OCI-LY7 (cell line): ENCODE measurements at regions of chr9 and their contacts with region 1.

Region 1: GRCh38 chr9:14189578-14189977 is 124.4 kb downstream of the NFIB start:
- DNase-seq: no peak
- H3K4me3 ChIP-seq: no peak overlapping the region
- H3K27ac ChIP-seq: no peak overlapping the region
- H3K4me1 ChIP-seq: peaks cover 19% of the 10 kb centered on the region
- CTCF ChIP-seq: no peak

Region 2: GRCh38 chr9:13427587-13427986 is 762.0 kb before region 1 on chr9:
- CTCF ChIA-PET with region 1: no interaction called
- POLR2A ChIA-PET with region 1: no interaction called
- intact Hi-C with region 1: no loop called
- DNase-seq: peak; percentile 57
- H3K4me3 ChIP-seq: no peak overlapping the region
- H3K27ac ChIP-seq: no peak overlapping the region
- H3K4me1 ChIP-seq: no peaks in the 10 kb centered on the region
- CTCF ChIP-seq: peak; percentile 94

Region 3: GRCh38 chr9:13932528-13933267 is 256.9 kb before region 1 on chr9:
- CTCF ChIA-PET with region 1: no interaction called
- POLR2A ChIA-PET with region 1: no interaction called
- intact Hi-C with region 1: no loop called
- DNase-seq: no peak
- H3K4me3 ChIP-seq: no peak overlapping the region
- H3K27ac ChIP-seq: no peak overlapping the region
- H3K4me1 ChIP-seq: no peaks in the 10 kb centered on the region
- CTCF ChIP-seq: no peak

Region 4: GRCh38 chr9:14133394-14133793 is 56.2 kb before region 1 on chr9:
- CTCF ChIA-PET with region 1: no interaction called
- POLR2A ChIA-PET with region 1: no interaction called
- intact Hi-C with region 1: no loop called
- DNase-seq: no peak
- H3K4me3 ChIP-seq: no peak overlapping the region
- H3K27ac ChIP-seq: no peak overlapping the region
- H3K4me1 ChIP-seq: no peaks in the 10 kb centered on the region
- CTCF ChIP-seq: no peak

Region 5: GRCh38 chr9:14203356-14204056 is 13.9 kb after region 1 on chr9:
- CTCF ChIA-PET with region 1: no interaction called
- POLR2A ChIA-PET with region 1: interaction called, 19 read pairs
- intact Hi-C with region 1: no loop called
- DNase-seq: no peak
- H3K4me3 ChIP-seq: no peak overlapping the region
- H3K27ac ChIP-seq: no peak overlapping the region
- H3K4me1 ChIP-seq: no peaks in the 10 kb centered on the region
- CTCF ChIP-seq: no peak